ENCODE measurements at regions of chr2 and their contacts with region 1.

Region 1: GRCh38 chr2:83817511-83817910 is 641.6 kb downstream of the SUCLG1 start:
- DNase-seq: peak; percentile 33
- H3K4me3 Mint-ChIP-seq: no peak overlapping the region
- H3K27ac Mint-ChIP-seq: no peak overlapping the region
- H3K4me1 Mint-ChIP-seq: peaks cover 6% of the 10 kb centered on the region
- H3K27me3 Mint-ChIP-seq: no peaks in the 10 kb centered on the region
- CTCF ChIP-seq: peak; percentile 36

Region 2: GRCh38 chr2:81901011-81901410 is 1916.5 kb before region 1 on chr2:
- CTCF ChIA-PET with region 1: no interaction called
- POLR2A ChIA-PET with region 1: no interaction called
- intact Hi-C with region 1: loop called (anchors 5 kb)
- DNase-seq: peak; percentile 38
- H3K4me3 Mint-ChIP-seq: no peak overlapping the region
- H3K27ac Mint-ChIP-seq: no peak overlapping the region
- H3K4me1 Mint-ChIP-seq: no peaks in the 10 kb centered on the region
- H3K27me3 Mint-ChIP-seq: no peaks in the 10 kb centered on the region
- CTCF ChIP-seq: peak; percentile 27

Region 3: GRCh38 chr2:83587309-83587708 is 230.2 kb before region 1 on chr2:
- CTCF ChIA-PET with region 1: no interaction called
- POLR2A ChIA-PET with region 1: no interaction called
- intact Hi-C with region 1: loop called (anchors 1 kb)
- DNase-seq: peak; percentile 51
- H3K4me3 Mint-ChIP-seq: no peak overlapping the region
- H3K27ac Mint-ChIP-seq: no peak overlapping the region
- H3K4me1 Mint-ChIP-seq: peaks cover 8% of the 10 kb centered on the region
- H3K27me3 Mint-ChIP-seq: no peaks in the 10 kb centered on the region
- CTCF ChIP-seq: peak; percentile 25

Region 4: GRCh38 chr2:83665894-83666293 is 151.6 kb before region 1 on chr2:
- CTCF ChIA-PET with region 1: no interaction called
- POLR2A ChIA-PET with region 1: no interaction called
- intact Hi-C with region 1: no loop called
- DNase-seq: peak; percentile 49
- H3K4me3 Mint-ChIP-seq: no peak overlapping the region
- H3K27ac Mint-ChIP-seq: no peak overlapping the region
- H3K4me1 Mint-ChIP-seq: no peaks in the 10 kb centered on the region
- H3K27me3 Mint-ChIP-seq: no peaks in the 10 kb centered on the region
- CTCF ChIP-seq: no peak

Measured in MCF 10A (cell line).